PC-9 (cell line): ENCODE measurements at regions of chr3 and their contacts with region 1.

Region 1: DNA sequence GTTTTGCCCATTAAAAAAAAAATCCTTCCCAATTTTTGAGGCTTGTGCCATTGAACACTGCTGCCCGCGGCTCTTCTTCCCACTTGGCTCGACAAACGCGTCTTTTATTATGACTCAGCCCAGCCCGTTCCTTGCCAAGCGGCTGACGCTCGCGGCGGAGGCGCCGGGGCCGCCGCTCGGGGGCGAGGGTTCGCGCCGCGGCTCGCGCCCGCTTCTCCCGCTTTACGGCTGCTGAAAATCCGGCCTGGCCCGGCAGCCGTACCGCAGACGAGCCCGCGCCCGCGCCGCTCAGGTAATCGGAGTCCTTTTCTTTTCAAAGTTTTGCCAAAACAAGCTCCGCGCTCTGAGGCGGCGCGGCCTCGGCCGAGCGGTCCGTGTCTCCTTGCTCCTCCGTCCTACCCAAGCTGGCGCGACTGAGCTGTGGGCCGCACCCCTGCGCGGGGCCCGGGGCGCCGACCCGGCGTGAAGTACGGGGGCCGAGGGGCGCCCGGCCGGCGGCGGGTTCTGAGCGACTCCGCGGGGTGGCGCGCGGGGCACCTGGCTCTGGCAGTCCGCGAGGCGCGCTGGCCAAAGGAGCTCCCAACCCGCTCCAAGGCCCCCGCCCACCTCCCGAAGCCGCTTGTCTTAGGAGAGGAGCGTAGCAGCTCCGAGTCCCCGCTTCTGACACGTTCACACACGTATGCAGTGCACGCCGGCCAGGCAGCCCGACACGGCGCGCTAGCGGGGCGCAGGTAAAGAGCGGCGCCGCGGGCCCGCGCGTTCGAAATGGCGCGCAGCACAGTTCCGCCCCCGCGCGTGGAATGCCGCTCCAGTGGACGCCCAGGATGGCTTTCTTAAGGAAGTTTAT is 418.2 kb upstream of the NAALADL2 start:
- DNase-seq: peak; percentile 82 to 88
- H3K4me3 ChIP-seq: peak overlapping the region; percentile 74
- H3K27ac ChIP-seq: peak overlapping the region; percentile 79
- H3K4me1 ChIP-seq: peaks cover 33% of the 10 kb centered on the region
- H3K27me3 ChIP-seq: no peaks in the 10 kb centered on the region
- CTCF ChIP-seq: 0 out of 2 replicates have a peak, but pooled peaks have one; percentile 4

Region 2: DNA sequence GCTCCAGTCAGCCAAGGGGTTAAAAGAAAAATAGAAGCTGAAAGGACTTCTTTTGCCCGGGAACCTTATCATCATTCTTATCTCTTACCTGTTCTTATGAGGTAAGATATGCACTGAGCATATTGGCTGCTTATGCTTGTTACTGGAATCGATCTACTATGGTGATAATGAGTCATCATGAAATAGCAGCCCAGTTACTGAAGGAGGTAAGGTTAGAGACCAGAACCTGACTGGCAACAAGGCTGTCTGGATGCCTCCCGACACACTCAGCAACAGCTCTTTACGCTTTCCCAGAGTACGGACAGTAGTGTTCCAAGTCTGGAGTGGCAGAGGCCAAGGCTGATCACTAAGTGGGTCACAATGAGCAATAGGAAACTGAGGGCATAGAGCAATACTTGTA is 729.4 kb before region 1 on chr3:
- CTCF ChIA-PET with region 1: interaction called, 5 read pairs
- POLR2A ChIA-PET with region 1: no interaction called
- intact Hi-C with region 1: loop called (anchors 10 kb)
- DNase-seq: peak; percentile 63 to 92
- H3K4me3 ChIP-seq: peak overlapping the region; percentile 37; the same call in 1 of the 2 replicates
- H3K27ac ChIP-seq: peak overlapping the region; percentile 38
- H3K4me1 ChIP-seq: peaks cover 16% of the 10 kb centered on the region
- H3K27me3 ChIP-seq: no peaks in the 10 kb centered on the region
- CTCF ChIP-seq: no peak

Region 3: DNA sequence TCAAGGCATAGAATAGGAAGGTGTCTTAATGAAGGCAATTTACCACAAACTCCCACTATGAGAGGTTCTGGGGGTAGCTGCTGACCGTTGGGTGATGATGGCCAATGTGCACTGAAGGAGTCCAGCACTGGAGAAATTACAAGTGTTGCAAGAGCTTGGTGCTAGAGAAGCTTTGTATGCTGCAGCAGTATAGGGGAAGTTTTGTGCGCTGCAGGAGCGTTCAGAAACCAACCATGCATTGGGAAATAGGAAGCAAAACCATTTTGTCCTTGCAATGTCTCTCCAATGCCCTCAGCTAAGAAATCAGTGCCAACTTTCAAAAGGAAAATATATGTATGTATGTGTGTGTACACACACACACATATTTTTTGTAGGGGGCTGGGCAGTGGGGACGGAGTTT is 23.4 kb before region 1 on chr3:
- CTCF ChIA-PET with region 1: interaction called, 10 read pairs
- POLR2A ChIA-PET with region 1: interaction called, 3 read pairs
- intact Hi-C with region 1: no loop called
- DNase-seq: no peak
- H3K4me3 ChIP-seq: no peak overlapping the region
- H3K27ac ChIP-seq: no peak overlapping the region
- H3K4me1 ChIP-seq: no peaks in the 10 kb centered on the region
- H3K27me3 ChIP-seq: no peaks in the 10 kb centered on the region
- CTCF ChIP-seq: no peak

Region 4: DNA sequence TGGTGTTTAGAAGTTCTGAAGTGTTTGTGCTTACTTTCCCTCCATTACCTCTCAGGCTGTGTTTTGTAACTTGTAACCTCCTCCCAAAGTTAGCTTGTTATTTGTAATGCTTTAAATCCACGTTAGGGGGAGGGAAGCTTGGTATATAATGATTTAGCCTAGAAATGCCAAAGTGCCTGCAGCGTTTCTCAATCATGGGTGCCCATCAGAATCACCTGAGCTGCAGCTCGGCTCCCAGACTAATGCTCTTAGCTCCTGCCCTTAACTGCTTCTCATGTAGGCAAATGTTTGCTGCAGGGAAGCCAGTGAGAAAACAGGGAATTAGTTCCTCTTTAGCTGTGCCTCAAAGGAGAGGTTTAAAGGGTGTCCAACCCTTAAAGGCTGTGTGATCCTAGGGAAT is 199.0 kb after region 1 on chr3:
- CTCF ChIA-PET with region 1: no interaction called
- POLR2A ChIA-PET with region 1: interaction called, 18 read pairs
- intact Hi-C with region 1: no loop called
- DNase-seq: no peak
- H3K4me3 ChIP-seq: no peak overlapping the region
- H3K27ac ChIP-seq: no peak overlapping the region
- H3K4me1 ChIP-seq: no peaks in the 10 kb centered on the region
- H3K27me3 ChIP-seq: no peaks in the 10 kb centered on the region
- CTCF ChIP-seq: no peak

Region 5: DNA sequence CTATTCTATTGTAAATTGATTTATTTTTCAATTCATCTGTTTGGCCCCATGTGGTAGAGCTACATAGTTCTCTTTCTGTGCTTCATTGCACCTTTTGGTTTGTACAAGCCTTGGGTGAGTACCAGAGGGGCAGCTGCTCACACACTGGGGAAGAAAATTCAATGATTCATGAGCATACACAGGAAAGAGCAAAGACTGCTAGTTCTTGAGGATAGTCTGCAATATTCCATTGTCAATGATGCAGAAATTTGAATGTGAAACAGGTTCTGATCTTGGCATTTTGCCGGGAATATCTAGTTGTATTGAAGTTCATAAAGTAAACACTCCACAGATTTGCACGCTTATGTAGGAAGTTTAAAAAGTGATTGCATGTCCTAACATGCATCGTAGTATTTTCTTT is 722.7 kb after region 1 on chr3:
- CTCF ChIA-PET with region 1: no interaction called
- POLR2A ChIA-PET with region 1: interaction called, 20 read pairs
- intact Hi-C with region 1: no loop called
- DNase-seq: no peak
- H3K4me3 ChIP-seq: no peak overlapping the region
- H3K27ac ChIP-seq: no peak overlapping the region
- H3K4me1 ChIP-seq: no peaks in the 10 kb centered on the region; the same call in 1 of the 2 replicates
- H3K27me3 ChIP-seq: no peaks in the 10 kb centered on the region
- CTCF ChIP-seq: no peak